Activated CD4-positive, alpha-beta T cell treated with anti-CD3 and anti-CD28 coated beads for 36 hours (primary cell): ENCODE measurements at regions of chr18 and their contacts with region 1.

Region 1: GRCh38 chr18:286515-287310 is 18.9 kb upstream of the THOC1 start:
- DNase-seq: no peak
- ATAC-seq: no peak
- H3K4me3 Mint-ChIP-seq: no peak overlapping the region
- H3K27ac Mint-ChIP-seq: no peak overlapping the region
- H3K4me1 Mint-ChIP-seq: peaks cover 3% of the 10 kb centered on the region
- H3K27me3 Mint-ChIP-seq: peaks cover 17% of the 10 kb centered on the region

Region 2: GRCh38 chr18:250688-251422 is 35.9 kb before region 1 on chr18:
- CTCF ChIA-PET with region 1: no interaction called
- POLR2A ChIA-PET with region 1: no interaction called
- intact Hi-C with region 1: no loop called
- DNase-seq: no peak
- ATAC-seq: no peak
- H3K4me3 Mint-ChIP-seq: no peak overlapping the region
- H3K27ac Mint-ChIP-seq: no peak overlapping the region
- H3K4me1 Mint-ChIP-seq: no peaks in the 10 kb centered on the region
- H3K27me3 Mint-ChIP-seq: no peaks in the 10 kb centered on the region

Region 3: DNA sequence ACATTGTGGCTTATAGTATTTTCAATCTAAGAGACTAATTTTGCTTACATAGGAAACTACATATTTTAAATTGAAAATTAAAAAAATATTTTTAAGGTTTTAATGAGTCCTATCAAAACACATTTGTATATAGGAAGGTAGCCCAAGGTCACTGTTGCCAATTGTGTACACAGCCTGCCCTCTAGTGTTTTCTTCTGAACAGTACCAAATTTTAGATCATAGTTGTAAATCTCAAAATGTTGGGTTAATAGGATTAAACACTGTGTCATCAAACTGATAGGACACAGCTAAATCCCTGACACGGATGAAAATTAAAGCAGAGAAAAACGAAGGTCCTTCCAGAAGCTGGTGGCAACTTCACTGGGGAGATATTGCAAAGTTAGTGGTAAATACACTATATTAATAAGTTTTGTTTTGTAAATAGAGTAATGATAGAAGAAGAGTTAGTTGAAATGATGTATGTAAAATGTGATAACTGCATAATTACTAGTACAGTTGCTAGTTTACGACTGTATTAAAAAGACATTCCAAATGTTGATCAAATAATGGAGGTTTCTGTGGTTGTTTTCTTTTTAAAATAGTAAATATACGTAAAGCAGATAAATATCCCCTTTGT is 329.8 kb after region 1 on chr18:
- CTCF ChIA-PET with region 1: no interaction called
- POLR2A ChIA-PET with region 1: no interaction called
- intact Hi-C with region 1: loop called in 1 of 2 experiments (anchors 5 kb)
- DNase-seq: no peak
- ATAC-seq: no peak
- H3K4me3 Mint-ChIP-seq: no peak overlapping the region
- H3K27ac Mint-ChIP-seq: no peak overlapping the region
- H3K4me1 Mint-ChIP-seq: no peaks in the 10 kb centered on the region
- H3K27me3 Mint-ChIP-seq: peaks cover 1% of the 10 kb centered on the region